Naive thymus-derived CD4-positive, alpha-beta T cell (primary cell): ENCODE measurements at regions of chrX and their contacts with region 1.

Region 1: GRCh38 chrX:149539283-149540130 is 1.3 kb upstream of the EOLA1 start:
- DNase-seq: peak; percentile 65 to 91 (median 86)
- ATAC-seq: peak; percentile 67
- H3K4me3 ChIP-seq: peak overlapping the region; percentile 66
- H3K4me3 Mint-ChIP-seq: peak overlapping the region; percentile 74 to 99 (median 90)
- H3K27ac ChIP-seq: peak overlapping the region; percentile 90
- H3K27ac Mint-ChIP-seq: peak overlapping the region; percentile 88 to 100 (median 94)
- H3K4me1 ChIP-seq: peaks cover 3 to 5% of the 10 kb centered on the region in 2 donors
- H3K4me1 Mint-ChIP-seq: peaks cover 0 to 15% (median 4%) of the 10 kb centered on the region in 7 donors
- H3K27me3 ChIP-seq: no peaks in the 10 kb centered on the region
- H3K27me3 Mint-ChIP-seq: no peaks in the 10 kb centered on the region

Region 2: GRCh38 chrX:147911192-147912022 is 1628.1 kb before region 1 on chrX and contains the start of gene FMR1:
- CTCF ChIA-PET with region 1: no interaction called
- POLR2A ChIA-PET with region 1: no interaction called
- intact Hi-C with region 1: loop called (anchors 1 to 5 kb)
- DNase-seq: peak; percentile 83 to 95 (median 93)
- ATAC-seq: peak; percentile 96
- H3K4me3 ChIP-seq: peak within 1 kb of the TSS; percentile 71
- H3K4me3 Mint-ChIP-seq: peak within 1 kb of the TSS; percentile 87 to 98 (median 96)
- H3K27ac ChIP-seq: peak within 1 kb of the TSS; percentile 93
- H3K27ac Mint-ChIP-seq: peak within 1 kb of the TSS; percentile 87 to 97 (median 94)
- H3K4me1 ChIP-seq: peaks cover 0 to 35% of the 10 kb centered on the region in 2 donors
- H3K4me1 Mint-ChIP-seq: peaks cover 7 to 43% (median 34%) of the 10 kb centered on the region in 7 donors
- H3K27me3 ChIP-seq: no peaks in the 10 kb centered on the region
- H3K27me3 Mint-ChIP-seq: peaks cover 0 to 2% (median 0%) of the 10 kb centered on the region in 5 donors
- total RNA-seq, gene FMR1: 50.6 to 84.2 (median 76.8) TPM

Region 3: DNA sequence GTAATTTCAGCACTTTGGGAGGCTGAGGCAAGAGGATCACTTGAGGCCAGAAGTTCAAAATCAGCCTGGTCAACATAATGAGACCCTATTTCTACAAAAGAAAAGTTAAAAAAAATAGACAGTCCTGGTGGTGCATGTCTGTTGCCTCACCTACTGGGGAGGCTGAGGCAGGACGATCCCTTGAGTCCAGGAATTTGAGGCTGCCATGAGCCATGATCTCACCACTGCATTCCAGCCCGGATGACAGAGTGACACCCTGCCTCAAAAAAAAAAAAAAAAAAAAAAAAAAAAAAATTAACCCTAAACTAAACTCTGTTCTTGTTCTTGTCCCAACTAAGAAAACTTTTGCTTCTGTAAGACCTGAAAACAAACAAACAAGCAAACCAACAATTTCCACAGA is 152.5 kb before region 1 on chrX:
- CTCF ChIA-PET with region 1: no interaction called
- POLR2A ChIA-PET with region 1: no interaction called
- intact Hi-C with region 1: no loop called
- DNase-seq: no peak
- ATAC-seq: no peak
- H3K4me3 ChIP-seq: no peak overlapping the region
- H3K4me3 Mint-ChIP-seq: no peak overlapping the region
- H3K27ac ChIP-seq: no peak overlapping the region
- H3K27ac Mint-ChIP-seq: no peak overlapping the region
- H3K4me1 ChIP-seq: no peaks in the 10 kb centered on the region
- H3K4me1 Mint-ChIP-seq: peaks cover 0 to 1% (median 0%) of the 10 kb centered on the region in 7 donors
- H3K27me3 ChIP-seq: no peaks in the 10 kb centered on the region
- H3K27me3 Mint-ChIP-seq: peaks cover 0 to 6% (median 4%) of the 10 kb centered on the region in 5 donors

Region 4: GRCh38 chrX:149512225-149512885 is 27.2 kb before region 1 on chrX:
- CTCF ChIA-PET with region 1: interaction called, 29 read pairs
- POLR2A ChIA-PET with region 1: interaction called, 4 read pairs
- intact Hi-C with region 1: loop called in 1 of 2 experiments (anchors 1 kb)
- DNase-seq: peak in 8 of 9 donors; percentile 34 to 56 (median 48)
- ATAC-seq: peak; percentile 88
- H3K4me3 ChIP-seq: no peak overlapping the region
- H3K4me3 Mint-ChIP-seq: peak overlapping the region in 1 of 10 donors; percentile 28
- H3K27ac ChIP-seq: no peak overlapping the region
- H3K27ac Mint-ChIP-seq: peak overlapping the region in 5 of 9 donors; percentile 17 to 71 (median 45)
- H3K4me1 ChIP-seq: peaks cover 4 to 16% of the 10 kb centered on the region in 2 donors
- H3K4me1 Mint-ChIP-seq: peaks cover 0 to 39% (median 13%) of the 10 kb centered on the region in 7 donors
- H3K27me3 ChIP-seq: no peaks in the 10 kb centered on the region
- H3K27me3 Mint-ChIP-seq: peaks cover 0 to 10% (median 0%) of the 10 kb centered on the region in 5 donors

Region 5: GRCh38 chrX:149527705-149528104 is 11.8 kb before region 1 on chrX:
- CTCF ChIA-PET with region 1: interaction called, 7 read pairs
- POLR2A ChIA-PET with region 1: interaction called, 18 read pairs
- intact Hi-C with region 1: loop called in 1 of 2 experiments (anchors 1 kb)
- DNase-seq: peak in 7 of 9 donors; percentile 27 to 62 (median 36)
- ATAC-seq: peak; percentile 43
- H3K4me3 ChIP-seq: no peak overlapping the region
- H3K4me3 Mint-ChIP-seq: peak overlapping the region in 3 of 10 donors; percentile 4 to 33 (median 10)
- H3K27ac ChIP-seq: no peak overlapping the region
- H3K27ac Mint-ChIP-seq: peak overlapping the region; percentile 35 to 88 (median 77)
- H3K4me1 ChIP-seq: peaks cover 18 to 26% of the 10 kb centered on the region in 2 donors
- H3K4me1 Mint-ChIP-seq: peaks cover 0 to 31% (median 14%) of the 10 kb centered on the region in 7 donors
- H3K27me3 ChIP-seq: no peaks in the 10 kb centered on the region
- H3K27me3 Mint-ChIP-seq: no peaks in the 10 kb centered on the region

Region 6: DNA sequence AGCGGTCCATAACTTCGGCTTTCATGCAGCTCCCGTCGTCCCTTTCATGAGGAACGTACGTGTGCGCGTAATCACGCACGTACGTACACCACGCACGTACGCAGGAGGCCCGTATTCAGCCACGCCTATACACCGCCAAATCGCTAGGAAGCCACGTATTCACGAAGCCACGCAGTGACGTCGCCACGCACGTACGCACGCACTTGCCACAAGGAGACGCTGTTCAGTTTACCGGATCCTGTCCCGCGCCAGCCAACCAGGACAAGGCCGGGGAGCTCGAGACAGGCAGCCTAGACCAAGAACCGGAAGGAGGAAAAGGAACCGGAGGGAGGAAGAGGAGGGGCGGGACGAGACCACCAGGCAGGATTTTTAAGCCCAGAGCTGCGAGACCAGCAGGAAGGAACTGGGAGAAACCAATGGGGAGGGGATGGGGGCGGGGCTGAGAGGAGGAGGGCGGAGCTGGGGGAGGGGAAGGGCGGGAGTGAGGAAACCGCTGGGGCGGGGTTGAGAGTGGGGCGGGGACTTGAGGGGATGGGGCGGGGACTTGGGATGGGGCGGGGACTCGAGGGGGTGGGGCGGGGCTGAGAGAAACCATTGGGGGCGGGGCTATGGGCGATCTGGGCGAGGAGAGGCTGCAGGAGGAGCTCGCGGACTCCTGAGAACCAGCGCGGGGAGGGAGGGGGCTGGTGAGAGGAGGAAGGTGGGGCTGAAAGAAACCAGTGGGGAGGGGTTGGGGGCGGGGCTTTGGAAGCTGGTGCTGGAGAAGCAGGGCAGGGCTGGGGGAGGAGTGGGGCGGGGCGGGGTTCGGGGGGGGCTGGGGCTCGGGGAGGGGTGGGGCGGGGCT is 399.1 kb after region 1 on chrX and contains the start of gene EOLA2:
- CTCF ChIA-PET with region 1: interaction called, 15 read pairs
- POLR2A ChIA-PET with region 1: interaction called, 35 read pairs
- intact Hi-C with region 1: no loop called
- DNase-seq: peak; percentile 67 to 96 (median 92)
- ATAC-seq: peak; percentile 67
- H3K4me3 ChIP-seq: peak within 1 kb of the TSS; percentile 57
- H3K4me3 Mint-ChIP-seq: peak within 1 kb of the TSS; percentile 81 to 98 (median 92)
- H3K27ac ChIP-seq: peak within 1 kb of the TSS; percentile 90
- H3K27ac Mint-ChIP-seq: peak within 1 kb of the TSS; percentile 92 to 99 (median 99)
- H3K4me1 ChIP-seq: peaks cover 5% of the 10 kb centered on the region in 2 donors
- H3K4me1 Mint-ChIP-seq: peaks cover 0 to 7% (median 0%) of the 10 kb centered on the region in 7 donors
- H3K27me3 ChIP-seq: no peaks in the 10 kb centered on the region
- H3K27me3 Mint-ChIP-seq: no peaks in the 10 kb centered on the region
- total RNA-seq, gene EOLA2: 43.1 to 59.1 (median 45.4) TPM

Region 7: DNA sequence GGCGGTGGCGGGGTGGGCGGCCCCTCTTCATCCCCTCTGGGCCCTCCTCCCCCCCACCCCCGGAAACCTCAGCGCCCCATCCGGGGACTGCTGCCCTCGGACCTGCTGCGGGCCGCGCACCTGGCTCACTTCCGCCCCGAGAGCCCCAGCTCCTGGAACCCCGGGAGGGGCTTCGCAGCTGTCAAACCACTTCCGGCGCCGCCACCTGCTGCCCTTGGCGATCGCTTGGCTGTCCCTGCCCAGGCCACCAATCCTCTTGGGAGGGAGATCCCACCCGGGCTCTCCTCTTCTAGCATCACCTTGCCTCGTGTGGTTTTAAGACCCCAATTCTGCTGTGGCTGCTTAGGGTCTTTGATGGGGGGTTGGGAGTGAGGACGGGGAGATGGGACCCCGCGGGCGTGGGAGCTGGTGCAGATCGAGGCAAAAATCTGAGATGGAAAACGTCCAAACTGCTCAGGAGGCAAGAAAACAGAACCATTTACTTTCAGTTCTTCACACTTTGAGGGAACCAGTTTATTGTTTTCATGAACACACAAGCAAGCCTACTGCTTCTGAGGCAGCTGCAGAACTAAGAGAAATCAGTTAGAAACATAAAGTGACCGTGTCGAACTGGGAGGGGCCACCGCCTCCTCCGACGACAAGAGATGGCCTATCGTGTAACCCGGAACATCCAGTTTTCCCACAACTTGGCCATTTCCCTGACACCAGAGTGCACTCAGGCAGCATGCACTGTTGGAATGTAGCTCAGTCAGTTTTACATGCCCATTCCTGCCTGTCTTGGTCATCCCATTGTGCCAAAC is 1154.5 kb after region 1 on chrX:
- CTCF ChIA-PET with region 1: no interaction called
- POLR2A ChIA-PET with region 1: no interaction called
- intact Hi-C with region 1: loop called in 1 of 2 experiments (anchors 10 kb)
- DNase-seq: peak; percentile 12 to 65 (median 51)
- ATAC-seq: peak; percentile 62
- H3K4me3 ChIP-seq: peak overlapping the region; percentile 61
- H3K4me3 Mint-ChIP-seq: peak overlapping the region; percentile 85 to 98 (median 94)
- H3K27ac ChIP-seq: peak overlapping the region; percentile 80
- H3K27ac Mint-ChIP-seq: peak overlapping the region; percentile 95 to 99 (median 97)
- H3K4me1 ChIP-seq: peaks cover 37 to 42% of the 10 kb centered on the region in 2 donors
- H3K4me1 Mint-ChIP-seq: peaks cover 25 to 68% (median 61%) of the 10 kb centered on the region in 7 donors
- H3K27me3 ChIP-seq: no peaks in the 10 kb centered on the region
- H3K27me3 Mint-ChIP-seq: no peaks in the 10 kb centered on the region

Region 8: DNA sequence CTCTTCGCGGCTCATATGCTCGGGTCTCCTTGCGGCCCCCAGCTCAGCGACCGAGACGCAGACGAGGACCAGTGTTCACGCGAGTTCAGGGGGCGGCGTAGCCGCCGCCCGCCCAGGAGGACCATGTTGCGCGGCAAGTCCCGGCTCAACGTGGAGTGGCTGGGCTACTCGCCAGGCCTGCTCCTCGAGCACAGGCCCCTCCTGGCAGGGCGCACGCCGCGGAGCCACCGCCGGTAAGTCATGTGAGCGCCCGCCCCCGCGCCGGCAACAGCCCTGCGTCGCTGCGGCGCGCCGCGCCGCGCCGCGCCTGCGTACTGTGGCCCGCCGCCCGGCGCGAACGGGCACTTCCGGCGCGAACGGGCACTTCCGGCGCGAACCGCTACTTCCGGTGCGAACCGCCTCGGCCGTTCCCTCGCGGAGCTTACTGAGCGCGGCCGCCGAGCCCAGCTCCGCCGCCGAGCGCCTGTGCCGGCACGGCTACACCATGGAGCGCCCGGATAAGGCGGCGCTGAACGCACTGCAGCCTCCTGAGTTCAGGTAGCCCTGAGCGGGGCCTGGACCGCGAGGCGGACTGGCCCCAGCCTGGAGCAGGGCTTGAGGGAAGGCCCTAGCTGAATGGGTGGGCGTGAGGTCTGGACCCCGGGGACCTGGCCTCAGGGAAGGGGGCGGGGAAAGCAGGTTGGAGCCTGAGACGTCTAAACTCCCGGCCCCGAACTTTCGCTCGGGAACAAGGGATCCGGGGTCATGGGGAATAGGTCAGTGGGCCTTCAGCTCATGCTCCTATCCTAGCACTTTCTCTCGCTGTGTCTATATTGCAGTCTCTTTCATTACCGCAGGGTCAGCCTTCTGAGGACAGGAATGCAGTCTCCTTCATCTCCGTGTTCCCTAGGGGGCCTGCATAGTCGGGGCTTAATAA is 1857.6 kb after region 1 on chrX and contains the start of gene VMA21:
- CTCF ChIA-PET with region 1: no interaction called
- POLR2A ChIA-PET with region 1: no interaction called
- intact Hi-C with region 1: loop called in 1 of 2 experiments (anchors 10 kb)
- DNase-seq: peak; percentile 70 to 83 (median 80)
- ATAC-seq: peak; percentile 88
- H3K4me3 ChIP-seq: peak within 1 kb of the TSS; percentile 82
- H3K4me3 Mint-ChIP-seq: peak within 1 kb of the TSS; percentile 77 to 91 (median 88)
- H3K27ac ChIP-seq: peak within 1 kb of the TSS; percentile 92
- H3K27ac Mint-ChIP-seq: peak within 1 kb of the TSS; percentile 95 to 99 (median 96)
- H3K4me1 ChIP-seq: peaks cover 17 to 21% of the 10 kb centered on the region in 2 donors
- H3K4me1 Mint-ChIP-seq: peaks cover 25 to 75% (median 71%) of the 10 kb centered on the region in 7 donors
- H3K27me3 ChIP-seq: no peaks in the 10 kb centered on the region
- H3K27me3 Mint-ChIP-seq: no peaks in the 10 kb centered on the region
- total RNA-seq, gene VMA21: 19.3 to 41.0 (median 29.3) TPM